ENCODE measurements at regions of chr10 and their contacts with region 1.

Region 1: GRCh38 chr10:30687698-30688219 is 58.2 kb upstream of the LYZL2 start:
- DNase-seq: peak; percentile 68
- ATAC-seq: peak; percentile 99
- H3K4me3 ChIP-seq: no peak overlapping the region
- H3K27ac ChIP-seq: no peak overlapping the region
- H3K4me1 ChIP-seq: no peaks in the 10 kb centered on the region
- H3K27me3 ChIP-seq: peaks cover 17% of the 10 kb centered on the region
- CTCF ChIP-seq: peak; percentile 87
- POLR2A ChIP-seq: no peak
- RAD21 ChIP-seq: peak; percentile 85

Region 2: GRCh38 chr10:29496341-29497162 is 1191.2 kb before region 1 on chr10:
- CTCF ChIA-PET with region 1: no interaction called
- POLR2A ChIA-PET with region 1: no interaction called
- dilution Hi-C with region 1: no loop called
- in situ Hi-C with region 1: loop called (anchors 5 kb)
- intact Hi-C with region 1: no loop called
- DNase-seq: peak; percentile 61
- ATAC-seq: peak; percentile 99
- H3K4me3 ChIP-seq: no peak overlapping the region
- H3K27ac ChIP-seq: no peak overlapping the region
- H3K4me1 ChIP-seq: peaks cover 2% of the 10 kb centered on the region; the same call in 1 of the 2 replicates
- H3K27me3 ChIP-seq: no peaks in the 10 kb centered on the region
- CTCF ChIP-seq: peak; percentile 94
- POLR2A ChIP-seq: no peak
- RAD21 ChIP-seq: peak; percentile 88

Region 3: GRCh38 chr10:30600005-30600404 is 87.8 kb before region 1 on chr10:
- CTCF ChIA-PET with region 1: no interaction called
- POLR2A ChIA-PET with region 1: interaction called, 18 read pairs
- dilution Hi-C with region 1: no loop called
- in situ Hi-C with region 1: no loop called
- intact Hi-C with region 1: no loop called
- DNase-seq: peak; percentile 18
- ATAC-seq: no peak
- H3K4me3 ChIP-seq: no peak overlapping the region
- H3K27ac ChIP-seq: no peak overlapping the region
- H3K4me1 ChIP-seq: no peaks in the 10 kb centered on the region
- H3K27me3 ChIP-seq: peaks cover 17% of the 10 kb centered on the region
- CTCF ChIP-seq: no peak
- POLR2A ChIP-seq: no peak
- RAD21 ChIP-seq: no peak

Region 4: DNA sequence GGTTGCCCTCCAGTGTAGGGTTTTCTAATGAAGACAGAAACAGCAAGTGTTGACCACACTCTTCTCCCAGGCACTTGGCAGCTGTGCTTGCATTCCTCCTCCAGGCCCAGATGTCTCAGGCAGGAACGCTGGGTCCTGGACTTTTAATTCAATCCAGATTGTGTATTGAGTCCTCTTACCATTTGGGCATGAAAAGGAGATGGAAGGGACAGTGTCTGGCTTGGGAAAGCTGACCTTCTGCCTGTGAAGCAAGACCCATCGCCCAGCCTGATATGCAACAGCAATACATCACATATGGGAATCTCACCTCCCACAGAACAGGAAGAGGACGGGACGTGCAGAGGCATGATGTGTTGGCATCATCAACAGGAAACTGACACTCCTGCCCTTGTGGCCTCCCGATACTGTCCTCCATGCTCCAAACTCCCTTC is 116.1 kb after region 1 on chr10:
- CTCF ChIA-PET with region 1: no interaction called
- POLR2A ChIA-PET with region 1: no interaction called
- dilution Hi-C with region 1: no loop called
- in situ Hi-C with region 1: no loop called
- intact Hi-C with region 1: no loop called
- DNase-seq: peak; percentile 68
- ATAC-seq: peak; percentile 68
- H3K4me3 ChIP-seq: no peak overlapping the region
- H3K27ac ChIP-seq: no peak overlapping the region
- H3K4me1 ChIP-seq: peaks cover 7% of the 10 kb centered on the region
- H3K27me3 ChIP-seq: no peaks in the 10 kb centered on the region
- CTCF ChIP-seq: no peak
- POLR2A ChIP-seq: no peak
- RAD21 ChIP-seq: no peak